ENCODE measurements at regions of chr17 and their contacts with region 1.

Region 1: GRCh38 chr17:50079334-50080095 is 15.6 kb upstream of the PDK2 start:
- DNase-seq: no peak
- H3K4me3 ChIP-seq: no peak overlapping the region
- CTCF ChIP-seq: peak; percentile 78

Region 2: GRCh38 chr17:50064258-50065001 is 15.1 kb before region 1 on chr17:
- CTCF ChIA-PET with region 1: interaction called, 13 read pairs
- POLR2A ChIA-PET with region 1: no interaction called
- DNase-seq: peak; percentile 94
- H3K4me3 ChIP-seq: no peak overlapping the region
- CTCF ChIP-seq: no peak

Measured in AG04449 (cell line).